HCT116 (cell line): ENCODE measurements at regions of chr15 and their contacts with region 1.

Region 1: GRCh38 chr15:44195151-44195740 is at the start of gene FRMD5:
- DNase-seq: peak; percentile 97
- ATAC-seq: peak; percentile 89
- H3K4me3 ChIP-seq: peak within 1 kb of the TSS; percentile 59 to 88
- H3K27ac ChIP-seq: peak within 1 kb of the TSS; percentile 97
- H3K4me1 ChIP-seq: peaks cover 28 to 60% of the 10 kb centered on the region in 2 experiments
- H3K27me3 ChIP-seq: no peaks in the 10 kb centered on the region
- CTCF ChIP-seq: peak in 2 of 3 experiments; percentile 14 to 46; a peak in 2 of 6 replicates
- POLR2A ChIP-seq: peak; percentile 80
- RAD21 ChIP-seq: no peak
- total RNA-seq, gene FRMD5: 27.2 TPM

Region 2: GRCh38 chr15:44102675-44103254 is 92.5 kb before region 1 on chr15:
- CTCF ChIA-PET with region 1: no interaction called
- POLR2A ChIA-PET with region 1: no interaction called
- RAD21 ChIA-PET with region 1: no interaction called
- intact Hi-C with region 1: loop called (anchors 1 kb)
- DNase-seq: peak; percentile 93
- ATAC-seq: peak; percentile 88
- H3K4me3 ChIP-seq: peak overlapping the region in 1 of 2 experiments; percentile 23; a peak in 2 of 4 replicates
- H3K27ac ChIP-seq: peak overlapping the region; percentile 72
- H3K4me1 ChIP-seq: peaks cover 32 to 63% of the 10 kb centered on the region in 2 experiments
- H3K27me3 ChIP-seq: no peaks in the 10 kb centered on the region
- CTCF ChIP-seq: no peak
- POLR2A ChIP-seq: no peak
- RAD21 ChIP-seq: peak; percentile 20; the same call in 1 of the 2 replicates

Region 3: DNA sequence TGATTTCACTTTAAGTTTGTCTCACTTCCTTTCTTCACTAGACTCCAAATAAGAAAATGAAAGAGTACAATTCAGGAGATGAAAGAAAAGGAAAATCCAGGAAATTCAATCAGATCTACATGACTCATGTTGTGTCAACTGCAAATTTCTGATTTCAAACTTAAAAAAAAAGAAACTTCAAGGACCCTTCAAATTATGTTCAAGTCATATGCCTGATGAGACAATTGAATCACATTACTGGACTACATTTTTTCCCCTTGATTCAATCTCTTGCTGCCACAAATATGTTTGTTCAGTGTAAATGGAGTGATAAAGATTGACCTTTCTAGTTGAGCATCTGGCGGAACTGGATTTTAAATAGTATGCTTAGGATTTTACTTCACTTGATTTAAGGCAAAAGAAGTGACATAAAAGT is 37.6 kb before region 1 on chr15:
- CTCF ChIA-PET with region 1: no interaction called
- POLR2A ChIA-PET with region 1: no interaction called
- RAD21 ChIA-PET with region 1: no interaction called
- intact Hi-C with region 1: loop called (anchors 1 kb)
- DNase-seq: peak; percentile 96
- ATAC-seq: peak; percentile 79
- H3K4me3 ChIP-seq: peak overlapping the region in 1 of 2 experiments; percentile 39; a peak in 2 of 4 replicates
- H3K27ac ChIP-seq: peak overlapping the region; percentile 98
- H3K4me1 ChIP-seq: peaks cover 72 to 93% of the 10 kb centered on the region in 2 experiments
- H3K27me3 ChIP-seq: no peaks in the 10 kb centered on the region
- CTCF ChIP-seq: no peak
- POLR2A ChIP-seq: no peak
- RAD21 ChIP-seq: peak; percentile 38; the same call in 1 of the 2 replicates